ENCODE measurements at regions of chr14 and their contacts with region 1.

Region 1: DNA sequence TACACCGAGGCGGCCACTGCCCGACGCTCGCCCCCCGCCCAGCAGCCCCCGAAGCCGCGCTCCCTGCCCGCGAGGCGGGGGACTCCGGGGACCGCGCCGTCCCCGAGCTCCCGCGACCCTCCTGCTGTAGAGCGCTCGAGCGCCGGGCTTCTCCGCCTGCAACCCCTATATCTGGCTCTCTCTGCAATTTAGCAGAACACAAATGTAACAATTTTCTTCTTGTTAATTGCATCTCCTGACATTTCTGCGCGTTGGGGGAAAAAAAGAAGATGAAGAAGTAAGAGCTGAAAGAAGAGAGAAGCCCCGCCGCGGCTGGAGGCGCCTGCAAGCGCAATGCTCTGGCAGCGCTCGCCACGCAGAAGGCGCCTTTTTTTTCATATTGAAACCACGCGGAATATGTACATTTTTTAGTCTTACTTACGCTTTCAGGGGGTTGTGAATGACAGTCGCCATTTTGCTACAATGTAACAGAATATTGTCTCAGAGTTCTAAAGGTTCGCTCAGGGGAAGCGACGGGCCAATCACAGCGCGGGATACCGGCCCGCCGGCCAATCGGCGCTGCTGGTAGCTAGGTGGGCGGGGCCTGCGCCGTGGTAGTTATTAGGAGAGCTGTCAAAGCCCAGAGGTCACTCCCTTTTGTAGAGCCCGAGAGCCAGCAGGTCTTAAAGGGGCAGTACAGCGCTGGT is at the start of gene DPF3:
- DNase-seq: peak; percentile 98
- ATAC-seq: peak; percentile 98 to 99
- total RNA-seq, gene DPF3: 18.9 to 23.3 TPM

Region 2: DNA sequence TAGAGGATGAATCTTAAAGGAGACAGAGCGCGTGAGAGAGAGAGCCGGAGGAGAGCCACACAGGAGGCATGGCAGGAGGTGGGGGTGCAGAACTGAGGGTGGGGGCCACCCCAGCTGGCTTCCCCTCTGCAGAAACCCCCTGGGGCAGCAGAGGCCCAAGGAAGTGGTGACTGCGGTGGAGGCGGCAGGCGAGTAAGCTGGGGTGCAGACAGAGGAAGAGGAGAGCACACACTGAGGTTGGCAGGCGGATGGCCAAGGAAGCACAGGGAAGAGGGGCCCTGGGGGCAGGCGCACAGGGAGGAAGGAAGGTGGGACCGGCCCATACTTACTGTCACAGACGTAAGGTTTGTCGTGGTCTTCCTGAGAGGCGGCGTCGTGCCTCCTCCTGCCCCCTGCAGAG is 179.7 kb before region 1 on chr14:
- intact Hi-C with region 1: loop called in 1 of 2 experiments (anchors 10 kb)
- DNase-seq: no peak
- ATAC-seq: no peak

Region 3: DNA sequence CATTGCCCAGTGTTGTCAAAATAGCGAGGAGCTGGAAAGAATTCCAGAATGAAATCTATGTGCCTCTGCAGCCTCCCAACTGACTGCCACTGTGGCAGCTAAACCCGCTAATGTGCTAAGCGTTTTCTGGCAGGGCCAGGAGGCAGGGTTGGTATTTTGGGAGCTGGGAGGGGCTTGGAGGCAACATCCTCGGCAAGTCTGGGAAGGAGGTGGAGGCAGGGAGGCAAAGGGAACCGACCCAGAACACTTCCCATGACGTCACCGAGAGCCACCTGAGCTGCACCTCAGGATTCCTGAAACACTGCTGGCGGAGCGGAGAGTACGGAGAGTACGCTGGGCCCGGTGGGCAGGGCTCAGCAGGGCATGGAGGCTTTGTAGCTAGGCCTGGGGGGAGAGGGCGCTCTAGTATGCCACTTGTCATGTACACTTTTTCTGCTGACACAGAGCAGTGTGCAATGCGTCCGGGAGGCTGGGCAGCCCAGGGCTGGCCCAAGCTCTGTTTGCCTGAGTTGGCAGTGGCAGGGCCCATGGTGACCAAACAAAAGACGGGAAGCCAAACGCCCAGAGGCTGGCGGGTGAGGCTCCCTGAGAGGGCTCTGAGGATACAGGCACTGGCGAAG is 81.4 kb before region 1 on chr14:
- intact Hi-C with region 1: loop called in 1 of 2 experiments (anchors 5 kb)
- DNase-seq: peak; percentile 74
- ATAC-seq: peak; percentile 90 to 91

Region 4: GRCh38 chr14:72830786-72831594 is 62.8 kb before region 1 on chr14:
- intact Hi-C with region 1: loop called in 1 of 2 experiments (anchors 5 kb)
- DNase-seq: no peak
- ATAC-seq: no peak

Region 5: GRCh38 chr14:72850360-72850759 is 43.4 kb before region 1 on chr14:
- intact Hi-C with region 1: no loop called
- DNase-seq: no peak
- ATAC-seq: no peak

Region 6: DNA sequence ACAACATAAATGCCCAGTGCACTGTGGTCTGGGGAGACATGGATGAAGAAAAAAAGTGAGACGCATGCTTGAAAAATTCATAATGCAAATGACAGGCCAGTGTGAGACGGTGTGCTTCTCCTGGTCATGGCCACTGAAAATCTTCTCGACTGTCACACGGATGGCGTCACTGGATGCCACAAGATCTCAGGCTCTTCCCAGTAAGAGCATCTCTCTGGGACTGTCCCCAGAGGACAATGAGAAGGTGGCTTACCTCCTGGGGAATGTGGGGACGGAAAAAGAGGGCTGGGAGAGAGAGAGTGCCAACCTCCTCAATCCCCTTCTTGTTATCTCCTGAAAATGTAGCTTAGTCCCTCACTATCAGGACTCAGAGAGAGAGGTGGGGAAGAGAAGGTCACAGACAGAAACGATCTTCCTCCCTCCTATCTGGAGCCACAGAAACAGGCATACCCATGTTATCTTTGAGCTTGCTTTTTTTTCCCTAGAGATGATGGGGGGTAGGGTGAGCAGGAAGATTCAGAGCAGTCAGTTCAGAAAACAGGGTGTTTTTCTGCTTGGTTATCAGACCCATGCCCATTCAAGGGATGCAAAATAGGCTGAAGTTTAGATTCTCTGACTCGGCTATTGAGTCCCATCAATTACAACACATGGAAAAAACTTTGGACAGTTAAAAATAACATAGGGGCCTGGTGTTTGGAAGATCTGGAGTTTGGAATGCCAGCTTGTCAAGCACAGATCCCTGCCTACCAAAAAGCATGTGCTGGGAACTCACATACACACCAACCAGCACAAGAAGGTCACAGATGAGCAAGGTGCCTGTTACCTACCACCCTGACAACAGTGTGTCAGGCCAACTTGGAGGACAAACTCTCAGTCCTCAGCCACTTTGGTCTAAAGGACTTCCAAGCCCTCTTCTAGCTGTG is 24.1 kb before region 1 on chr14:
- intact Hi-C with region 1: no loop called
- DNase-seq: no peak
- ATAC-seq: peak; percentile 58 to 74

Region 7: DNA sequence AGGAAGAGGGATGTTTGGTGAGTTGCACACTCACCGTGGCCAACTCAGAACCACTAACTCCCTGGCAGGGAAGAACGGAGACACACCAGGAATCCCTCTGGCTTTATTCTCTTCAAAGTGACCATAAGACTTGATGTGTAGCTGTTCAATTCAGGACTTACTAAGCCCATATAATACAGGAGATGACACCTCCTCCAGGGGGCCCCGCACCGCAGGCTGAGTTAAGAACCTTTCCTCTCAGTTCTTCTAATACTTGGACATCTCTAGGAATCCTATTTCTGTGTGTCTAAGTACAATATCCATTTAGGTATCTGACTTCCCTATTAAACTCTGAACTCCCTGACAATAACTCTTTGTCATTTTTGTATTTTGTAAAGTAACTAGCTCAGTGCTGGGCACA is 82.0 kb after region 1 on chr14:
- intact Hi-C with region 1: no loop called
- DNase-seq: no peak
- ATAC-seq: no peak

Region 8: GRCh38 chr14:73116079-73116665 is 222.4 kb after region 1 on chr14:
- intact Hi-C with region 1: no loop called
- DNase-seq: no peak
- ATAC-seq: no peak

Measured in left cardiac atrium (tissue), 4 donors.